Kidney (tissue), 22 donors: ENCODE measurements at regions of chr9 and their contacts with region 1.

Region 1: GRCh38 chr9:130701056-130702022 is 7.8 kb downstream of the EXOSC2 start:
- DNase-seq: peak; percentile 82 to 94 (median 85)
- H3K4me3 ChIP-seq: no peak overlapping the region
- H3K27ac ChIP-seq: no peak overlapping the region
- H3K4me1 ChIP-seq: no peaks in the 10 kb centered on the region
- H3K27me3 ChIP-seq: no peaks in the 10 kb centered on the region
- CTCF ChIP-seq: peak; percentile 80

Region 2: DNA sequence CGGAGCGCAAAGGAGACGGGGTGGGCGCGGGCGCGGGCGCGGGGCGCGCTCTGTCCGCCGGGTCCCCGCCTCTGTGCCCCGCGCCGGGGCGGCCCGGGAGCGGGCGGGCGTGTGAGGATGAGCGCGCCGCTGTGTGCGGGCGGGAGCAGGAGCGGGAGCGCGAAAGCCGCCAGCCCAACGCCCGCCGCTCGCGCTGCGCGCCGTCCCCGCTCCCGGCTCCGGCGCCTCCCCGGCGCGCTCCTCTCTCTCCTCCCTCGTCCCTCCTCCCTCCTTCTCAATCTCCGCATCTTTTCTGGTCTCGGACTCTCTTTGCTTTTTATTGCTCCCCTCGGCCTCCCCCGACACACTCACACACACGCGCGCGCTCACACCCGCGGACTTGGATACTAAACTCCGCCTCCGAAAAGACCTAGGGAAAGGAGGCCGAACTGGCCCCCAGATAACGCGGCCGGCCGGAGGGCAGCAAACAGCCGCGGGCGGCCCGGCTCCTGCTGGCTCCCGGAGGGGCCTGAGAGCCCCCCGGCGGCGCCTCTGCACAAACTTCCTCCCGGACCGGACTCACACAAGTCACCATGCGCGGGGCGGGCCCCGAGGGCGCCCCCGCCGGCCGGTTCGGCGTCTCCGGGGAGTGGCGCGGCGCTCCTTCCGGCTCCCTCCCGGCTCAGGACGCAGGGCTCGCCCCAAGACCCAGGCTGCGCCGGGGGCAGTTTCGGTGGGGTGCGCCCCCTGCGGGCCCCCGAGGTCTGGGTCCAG is 237.5 kb after region 1 on chr9 and contains the start of gene FIBCD1:
- intact Hi-C with region 1: loop called (anchors 10 kb)
- DNase-seq: peak in 3 of 5 donors; percentile 53 to 73 (median 65)
- H3K4me3 ChIP-seq: no peak within 1 kb of the TSS
- H3K27ac ChIP-seq: no peak within 1 kb of the TSS
- H3K4me1 ChIP-seq: peaks cover 0 to 2% (median 0%) of the 10 kb centered on the region in 3 donors
- H3K27me3 ChIP-seq: peaks cover 12% of the 10 kb centered on the region
- CTCF ChIP-seq: no peak
- total RNA-seq, gene FIBCD1: 0.25 TPM

Region 3: GRCh38 chr9:131046581-131047202 is 345.4 kb after region 1 on chr9:
- intact Hi-C with region 1: loop called (anchors 10 kb)
- DNase-seq: peak; percentile 72 to 89 (median 81)
- H3K4me3 ChIP-seq: no peak overlapping the region
- H3K27ac ChIP-seq: no peak overlapping the region
- H3K4me1 ChIP-seq: peaks cover 0 to 2% (median 0%) of the 10 kb centered on the region in 3 donors
- H3K27me3 ChIP-seq: no peaks in the 10 kb centered on the region
- CTCF ChIP-seq: peak; percentile 86